ENCODE measurements at regions of chr6 and their contacts with region 1.

Region 1: DNA sequence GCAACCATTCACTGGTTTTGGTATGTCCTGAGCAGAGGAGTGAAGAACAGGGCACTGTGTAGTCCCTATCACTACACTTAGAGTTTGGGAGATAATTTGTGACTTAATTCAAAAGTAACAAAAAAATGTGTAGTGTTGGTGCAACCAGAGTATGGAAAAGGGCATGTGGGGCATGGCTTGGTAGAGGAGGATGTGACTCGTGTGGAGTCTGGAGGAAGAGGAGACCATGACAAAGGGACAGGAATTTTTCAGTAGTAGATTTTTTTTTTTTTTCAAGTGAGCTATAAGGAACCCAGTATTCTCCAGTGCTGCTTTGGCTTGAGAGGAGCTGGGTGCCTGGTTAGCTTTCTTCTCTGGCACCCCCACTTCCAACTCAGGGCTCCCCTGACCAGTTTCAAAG is 5.1 kb downstream of the MTRES1 start:
- DNase-seq: no peak
- H3K4me3 Mint-ChIP-seq: no peak overlapping the region
- H3K27ac Mint-ChIP-seq: no peak overlapping the region
- H3K4me1 Mint-ChIP-seq: peaks cover 42% of the 10 kb centered on the region
- H3K27me3 Mint-ChIP-seq: no peaks in the 10 kb centered on the region

Region 2: GRCh38 chr6:106325336-106326178 is 707.6 kb before region 1 on chr6 and contains the start of gene ATG5:
- CTCF ChIA-PET with region 1: no interaction called
- intact Hi-C with region 1: loop called (anchors 1 kb)
- DNase-seq: peak; percentile 100
- H3K4me3 Mint-ChIP-seq: peak within 1 kb of the TSS; percentile 99
- H3K27ac Mint-ChIP-seq: peak within 1 kb of the TSS; percentile 89
- H3K4me1 Mint-ChIP-seq: peaks cover 39% of the 10 kb centered on the region
- H3K27me3 Mint-ChIP-seq: no peaks in the 10 kb centered on the region
- total RNA-seq, gene ATG5: 20.2 to 20.7 TPM

Region 3: DNA sequence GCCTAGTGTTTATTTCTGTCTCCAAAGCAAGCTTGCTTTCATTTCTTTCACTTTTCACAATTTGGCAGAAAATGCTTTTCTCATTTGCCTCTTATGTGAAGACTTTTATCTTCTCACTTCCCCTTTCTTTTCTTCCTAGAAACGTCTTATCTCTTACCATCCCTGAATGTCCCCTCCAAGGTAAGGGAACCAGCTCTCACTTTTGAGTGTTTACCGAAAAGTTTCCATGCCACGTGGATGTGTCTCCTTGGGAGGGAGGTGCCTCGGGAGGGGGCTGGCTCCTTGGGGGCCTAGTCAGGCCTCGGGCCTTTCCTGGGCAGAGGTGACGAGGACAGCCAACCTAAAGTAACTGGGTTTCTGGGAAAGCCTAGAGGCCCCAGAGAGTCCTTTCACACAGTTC is 186.0 kb before region 1 on chr6:
- CTCF ChIA-PET with region 1: no interaction called
- intact Hi-C with region 1: no loop called
- DNase-seq: no peak
- H3K4me3 Mint-ChIP-seq: no peak overlapping the region
- H3K27ac Mint-ChIP-seq: no peak overlapping the region
- H3K4me1 Mint-ChIP-seq: no peaks in the 10 kb centered on the region
- H3K27me3 Mint-ChIP-seq: peaks cover 13% of the 10 kb centered on the region

Region 4: DNA sequence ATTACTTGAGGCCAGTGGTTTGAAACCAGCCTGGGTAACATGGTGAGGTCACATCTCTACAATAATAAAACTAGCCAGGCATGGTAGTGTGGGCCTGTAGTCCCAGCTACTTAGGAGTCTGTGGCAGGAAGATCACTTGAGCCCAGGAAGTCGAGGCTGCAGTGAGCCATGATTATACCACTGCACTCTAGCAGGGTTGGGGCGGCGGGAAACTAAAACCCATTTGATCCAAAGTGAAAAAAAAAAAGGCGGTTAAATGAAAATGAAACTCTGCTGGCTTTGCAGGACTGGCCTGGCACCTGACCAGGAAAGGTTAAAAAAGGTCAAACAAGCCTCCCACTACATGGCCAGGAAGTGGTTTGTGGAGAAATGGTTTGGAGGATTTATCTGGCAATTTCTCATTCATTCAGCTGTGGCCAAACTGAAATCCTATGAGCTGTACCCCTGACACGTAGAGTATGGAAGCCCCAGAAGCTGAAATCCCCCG is 31.5 kb after region 1 on chr6:
- CTCF ChIA-PET with region 1: interaction called, 6 read pairs
- intact Hi-C with region 1: loop called (anchors 2 kb)
- DNase-seq: peak; percentile 29
- H3K4me3 Mint-ChIP-seq: no peak overlapping the region
- H3K27ac Mint-ChIP-seq: no peak overlapping the region
- H3K4me1 Mint-ChIP-seq: peaks cover 35% of the 10 kb centered on the region
- H3K27me3 Mint-ChIP-seq: no peaks in the 10 kb centered on the region